ENCODE measurements at regions of chr9 and their contacts with region 1.

Region 1: DNA sequence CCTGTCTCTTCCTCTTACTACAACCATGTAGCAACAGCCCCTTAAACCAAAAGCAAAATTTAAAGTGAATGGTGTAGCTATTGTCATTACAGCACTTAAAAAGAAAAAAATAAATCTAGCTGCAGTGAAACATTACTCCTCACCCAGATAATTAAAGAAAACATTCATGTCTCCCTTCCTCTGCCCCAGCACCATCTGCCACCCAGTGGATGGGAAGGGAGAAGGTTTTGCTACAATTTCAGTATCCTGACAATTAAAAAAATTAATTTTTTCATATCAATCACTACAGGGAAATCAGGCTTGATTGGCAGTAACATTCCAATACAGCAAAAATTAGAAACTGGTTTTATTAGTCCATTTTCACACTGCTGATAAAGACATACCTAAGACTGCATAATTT is 147.4 kb upstream of the PUM3 start:
- DNase-seq: no peak
- H3K4me3 ChIP-seq: no peak overlapping the region
- H3K27ac ChIP-seq: no peak overlapping the region
- H3K4me1 ChIP-seq: no peaks in the 10 kb centered on the region
- CTCF ChIP-seq: peak; percentile 28; the same call in 1 of the 2 replicates

Region 2: DNA sequence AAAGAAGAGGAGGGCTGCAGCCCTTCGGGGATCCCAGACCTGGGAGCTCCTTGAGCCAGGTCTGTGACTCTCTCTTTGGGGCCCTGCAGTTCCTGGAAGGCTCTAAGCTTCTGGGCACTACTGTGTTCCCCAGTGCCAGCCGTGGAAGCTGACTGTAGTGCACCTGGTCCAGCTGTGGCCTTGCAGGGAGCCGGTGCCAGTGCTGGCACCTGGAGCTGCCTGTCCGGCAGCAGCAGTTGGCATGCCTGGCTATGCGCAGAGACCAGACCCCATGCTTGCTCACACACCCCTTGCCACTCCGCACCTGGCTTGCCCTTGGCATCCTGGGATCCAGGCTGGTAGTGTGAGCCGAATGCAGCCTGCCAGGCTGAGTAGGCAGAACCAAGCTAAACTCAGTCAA is 56.4 kb before region 1 on chr9:
- CTCF ChIA-PET with region 1: no interaction called
- POLR2A ChIA-PET with region 1: no interaction called
- intact Hi-C with region 1: no loop called
- DNase-seq: no peak
- H3K4me3 ChIP-seq: no peak overlapping the region
- H3K27ac ChIP-seq: no peak overlapping the region
- H3K4me1 ChIP-seq: no peaks in the 10 kb centered on the region
- CTCF ChIP-seq: no peak

Region 3: GRCh38 chr9:3059781-3060468 is 68.6 kb after region 1 on chr9:
- CTCF ChIA-PET with region 1: no interaction called
- POLR2A ChIA-PET with region 1: no interaction called
- intact Hi-C with region 1: loop called (anchors 10 kb)
- DNase-seq: no peak
- H3K4me3 ChIP-seq: no peak overlapping the region
- H3K27ac ChIP-seq: no peak overlapping the region
- H3K4me1 ChIP-seq: no peaks in the 10 kb centered on the region
- CTCF ChIP-seq: no peak